ENCODE measurements at regions of chr20 and their contacts with region 1.

Region 1: GRCh38 chr20:57383447-57384347 is 7.5 kb upstream of the RBM38 start:
- DNase-seq: peak in 1 of 4 donors; percentile 31
- ATAC-seq: no peak
- H3K4me3 ChIP-seq: no peak overlapping the region
- H3K27ac ChIP-seq: no peak overlapping the region
- H3K4me1 ChIP-seq: peaks cover 0 to 14% of the 10 kb centered on the region in 2 donors
- H3K27me3 ChIP-seq: no peaks in the 10 kb centered on the region
- CTCF ChIP-seq: no peak

Region 2: DNA sequence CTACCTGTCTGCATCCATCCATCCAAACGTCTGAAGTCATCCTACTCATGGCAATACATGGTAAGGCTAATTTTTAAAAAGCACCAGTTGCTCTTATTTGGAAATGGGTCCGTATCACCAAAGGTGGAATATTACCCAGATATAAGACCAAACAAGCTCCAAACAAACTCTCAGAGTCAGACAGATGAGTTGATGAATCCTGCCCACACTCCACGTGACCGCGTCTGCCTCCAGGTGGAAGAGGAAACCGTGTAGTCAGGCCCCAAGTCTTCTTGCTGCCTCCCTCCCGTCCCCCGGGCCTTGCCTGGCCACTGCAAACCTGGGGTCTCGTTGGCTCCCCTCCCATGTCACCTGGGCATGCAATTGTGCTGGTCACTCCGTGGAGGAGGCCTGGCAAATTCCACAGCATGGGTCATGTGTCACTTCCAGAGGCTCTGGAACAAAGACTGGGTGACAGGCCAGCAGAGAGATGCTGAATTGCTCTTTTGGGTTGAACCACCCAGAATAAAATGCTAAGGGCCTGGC is 109.5 kb after region 1 on chr20:
- intact Hi-C with region 1: loop called (anchors 5 kb)
- DNase-seq: no peak
- ATAC-seq: no peak
- H3K4me3 ChIP-seq: no peak overlapping the region
- H3K27ac ChIP-seq: no peak overlapping the region
- H3K4me1 ChIP-seq: peaks cover 0 to 13% of the 10 kb centered on the region in 2 donors
- H3K27me3 ChIP-seq: peaks cover 6 to 24% of the 10 kb centered on the region in 2 donors
- CTCF ChIP-seq: no peak

Region 3: GRCh38 chr20:57498425-57499400 is 115.0 kb after region 1 on chr20:
- intact Hi-C with region 1: loop called (anchors 5 kb)
- DNase-seq: no peak
- ATAC-seq: peak; percentile 55
- H3K4me3 ChIP-seq: no peak overlapping the region
- H3K27ac ChIP-seq: no peak overlapping the region
- H3K4me1 ChIP-seq: peaks cover 2 to 34% of the 10 kb centered on the region in 2 donors
- H3K27me3 ChIP-seq: peaks cover 9 to 72% of the 10 kb centered on the region in 2 donors
- CTCF ChIP-seq: no peak

Measured in left lung (tissue), 14 donors.